ENCODE measurements at regions of chr17 and their contacts with region 1.

Region 1: GRCh38 chr17:76278952-76279741 is 14.0 kb downstream of the UBALD2 start:
- DNase-seq: peak; percentile 70
- H3K4me3 ChIP-seq: no peak overlapping the region
- H3K27ac ChIP-seq: no peak overlapping the region
- H3K4me1 ChIP-seq: no peaks in the 10 kb centered on the region
- H3K27me3 ChIP-seq: no peaks in the 10 kb centered on the region
- CTCF ChIP-seq: peak; percentile 89 to 91
- POLR2A ChIP-seq: no peak

Region 2: DNA sequence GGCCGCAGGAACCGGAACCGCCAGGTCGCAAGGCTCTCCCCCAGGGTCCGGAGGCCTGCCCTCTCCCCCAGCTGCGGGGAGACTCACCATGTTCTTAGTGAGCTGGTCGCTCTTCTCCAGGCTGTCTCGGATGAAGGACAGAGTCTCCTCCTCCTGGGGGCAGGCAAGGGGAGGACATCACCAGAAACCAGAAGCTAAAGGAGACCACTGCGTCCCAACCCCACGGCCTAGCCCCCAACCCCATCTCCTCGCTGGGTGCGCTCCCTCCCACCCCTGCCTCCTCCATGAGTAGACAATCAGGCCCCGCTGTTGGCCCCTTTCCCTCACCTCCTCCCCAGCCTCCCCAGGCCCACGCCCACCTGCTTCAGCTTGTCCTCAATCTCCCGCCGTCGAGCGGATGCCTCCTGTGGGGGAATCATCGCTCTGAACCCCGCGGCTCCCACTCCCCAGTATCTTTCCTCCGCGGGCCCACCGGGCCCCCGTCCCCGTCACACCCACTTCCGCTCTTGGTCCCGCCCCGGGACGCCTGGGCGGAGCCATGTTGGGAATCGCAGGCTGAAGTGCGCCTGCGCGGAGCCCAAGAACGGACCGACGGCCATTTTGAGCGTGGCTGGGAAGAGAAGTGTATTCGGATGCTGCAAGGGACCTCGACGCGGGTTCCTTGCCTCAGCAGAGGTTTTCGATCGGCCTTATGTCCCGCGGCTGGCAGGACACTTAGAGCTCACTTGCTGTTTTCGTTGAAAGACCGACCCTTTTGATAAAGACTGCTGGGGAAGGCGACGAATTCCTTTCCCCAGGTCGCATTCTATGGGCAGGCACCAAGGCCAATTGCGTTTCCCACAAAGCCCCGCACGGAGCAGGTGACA is 175.6 kb before region 1 on chr17 and contains the start of gene EXOC7:
- CTCF ChIA-PET with region 1: interaction called, 24 read pairs
- POLR2A ChIA-PET with region 1: no interaction called
- dilution Hi-C with region 1: no loop called
- intact Hi-C with region 1: no loop called
- DNase-seq: peak; percentile 91
- H3K4me3 ChIP-seq: peak within 1 kb of the TSS; percentile 73 to 87 (median 78)
- H3K27ac ChIP-seq: peak within 1 kb of the TSS; percentile 52
- H3K4me1 ChIP-seq: peaks cover 8% of the 10 kb centered on the region
- H3K27me3 ChIP-seq: no peaks in the 10 kb centered on the region
- CTCF ChIP-seq: peak in 1 of 2 donors; percentile 17
- POLR2A ChIP-seq: peak; percentile 88
- total RNA-seq, gene EXOC7: 122 and 137 TPM in 2 replicates

Region 3: DNA sequence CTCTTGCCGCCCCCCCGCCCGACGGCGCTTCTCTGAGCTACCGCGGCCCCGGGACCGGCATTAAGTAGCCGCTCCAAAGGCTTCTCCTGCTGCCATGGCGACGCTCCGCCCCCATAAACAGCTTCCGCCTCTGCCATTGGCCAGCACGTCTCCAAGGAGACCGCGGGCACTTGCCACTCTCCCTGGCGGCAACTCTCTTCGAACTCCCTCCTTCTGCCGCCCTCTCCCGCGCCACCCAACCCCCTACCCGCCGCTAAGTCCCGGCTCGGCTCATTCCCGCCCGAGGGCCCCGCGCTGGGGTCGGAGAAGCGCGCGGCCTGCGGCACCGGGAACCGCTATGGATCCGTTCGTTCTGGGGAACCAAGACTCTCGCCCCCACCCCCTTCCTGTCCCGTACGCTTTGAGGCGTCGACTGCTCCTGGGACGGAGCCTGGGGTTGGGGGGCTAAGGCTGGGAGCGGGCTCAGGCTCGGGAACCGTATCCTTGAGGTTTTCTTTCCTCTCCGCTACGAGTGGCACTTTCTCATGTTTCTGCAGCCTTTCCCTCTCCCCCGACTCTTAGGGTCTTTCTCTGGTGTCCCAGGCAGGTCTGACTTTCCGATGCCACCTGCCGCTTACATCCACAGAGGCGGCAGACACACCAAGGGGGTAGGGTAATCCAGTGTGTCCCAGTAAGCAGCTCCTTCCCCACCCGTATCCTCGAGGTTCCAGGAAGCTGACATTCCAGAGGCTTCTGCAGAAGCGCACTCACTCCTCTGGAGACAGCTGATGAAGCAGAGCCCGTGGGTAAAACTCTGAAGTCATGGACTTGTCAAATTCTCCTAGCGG is 137.7 kb before region 1 on chr17 and contains the start of gene FOXJ1:
- CTCF ChIA-PET with region 1: interaction called, 16 read pairs
- POLR2A ChIA-PET with region 1: no interaction called
- dilution Hi-C with region 1: no loop called
- intact Hi-C with region 1: no loop called
- DNase-seq: peak; percentile 95
- H3K4me3 ChIP-seq: peak within 1 kb of the TSS in 2 of 3 experiments; percentile 39 to 56
- H3K27ac ChIP-seq: no peak within 1 kb of the TSS
- H3K4me1 ChIP-seq: peaks cover 19% of the 10 kb centered on the region
- H3K27me3 ChIP-seq: peaks cover 16 to 22% of the 10 kb centered on the region in 2 experiments
- CTCF ChIP-seq: no peak
- POLR2A ChIP-seq: no peak
- total RNA-seq, gene FOXJ1: not detected in 2 replicates

Region 4: GRCh38 chr17:76191896-76192295 is 87.3 kb before region 1 on chr17:
- CTCF ChIA-PET with region 1: interaction called, 14 read pairs
- POLR2A ChIA-PET with region 1: no interaction called
- dilution Hi-C with region 1: no loop called
- intact Hi-C with region 1: no loop called
- DNase-seq: no peak
- H3K4me3 ChIP-seq: no peak overlapping the region
- H3K27ac ChIP-seq: no peak overlapping the region
- H3K4me1 ChIP-seq: no peaks in the 10 kb centered on the region
- H3K27me3 ChIP-seq: peaks cover 19 to 28% of the 10 kb centered on the region in 2 experiments
- CTCF ChIP-seq: no peak
- POLR2A ChIP-seq: no peak

Region 5: DNA sequence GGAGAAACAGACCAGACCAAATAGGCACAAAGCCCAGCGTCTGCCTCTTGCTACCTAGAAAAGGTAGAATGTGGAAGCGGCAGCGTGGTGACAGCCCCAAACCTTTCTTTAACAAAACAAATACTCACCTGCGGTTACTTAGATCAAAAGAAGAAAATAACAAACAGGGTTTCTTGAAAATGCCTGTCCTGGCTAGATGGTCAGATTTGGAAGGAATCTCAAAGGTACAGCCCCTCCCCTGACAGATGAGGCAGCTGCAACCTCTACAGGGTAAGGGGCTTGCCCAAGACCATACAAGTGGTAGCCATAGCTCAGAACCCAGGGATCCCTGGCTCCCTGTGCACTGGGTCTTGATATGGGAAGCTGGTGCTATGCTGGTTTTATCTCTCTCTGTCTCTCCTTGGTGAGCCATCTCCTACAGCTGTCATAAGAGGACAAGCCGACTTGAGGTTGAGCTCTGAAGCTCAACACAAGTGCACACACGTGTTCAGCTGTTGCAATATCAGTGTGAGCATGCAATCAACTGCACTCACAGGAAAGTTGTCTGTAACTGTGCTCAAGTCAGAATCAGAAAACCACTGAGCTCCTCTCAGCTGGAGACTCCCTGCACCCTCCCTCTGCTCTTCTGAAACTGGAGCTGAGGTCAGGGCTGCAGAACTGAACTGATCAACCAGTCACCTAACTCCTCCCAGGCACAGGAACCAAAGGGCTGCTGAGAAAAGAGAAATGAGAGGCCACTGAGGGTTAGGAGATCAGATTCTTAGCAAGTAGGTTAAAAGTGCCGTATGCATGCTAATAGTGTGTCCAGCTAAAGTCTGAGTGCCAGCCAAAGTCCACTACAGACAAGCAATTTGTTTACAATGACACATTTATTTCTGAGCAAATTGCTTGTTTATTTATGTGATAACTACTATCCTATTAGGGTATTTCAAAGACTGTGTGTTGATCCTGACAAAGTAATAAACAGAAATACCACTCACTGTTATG is 32.8 kb before region 1 on chr17:
- CTCF ChIA-PET with region 1: interaction called, 125 read pairs
- POLR2A ChIA-PET with region 1: interaction called, 4 read pairs
- dilution Hi-C with region 1: no loop called
- intact Hi-C with region 1: loop called (anchors 2 kb)
- DNase-seq: no peak
- H3K4me3 ChIP-seq: no peak overlapping the region
- H3K27ac ChIP-seq: no peak overlapping the region
- H3K4me1 ChIP-seq: no peaks in the 10 kb centered on the region
- H3K27me3 ChIP-seq: peaks cover 27 to 29% of the 10 kb centered on the region in 2 experiments
- CTCF ChIP-seq: no peak
- POLR2A ChIP-seq: no peak

Region 6: DNA sequence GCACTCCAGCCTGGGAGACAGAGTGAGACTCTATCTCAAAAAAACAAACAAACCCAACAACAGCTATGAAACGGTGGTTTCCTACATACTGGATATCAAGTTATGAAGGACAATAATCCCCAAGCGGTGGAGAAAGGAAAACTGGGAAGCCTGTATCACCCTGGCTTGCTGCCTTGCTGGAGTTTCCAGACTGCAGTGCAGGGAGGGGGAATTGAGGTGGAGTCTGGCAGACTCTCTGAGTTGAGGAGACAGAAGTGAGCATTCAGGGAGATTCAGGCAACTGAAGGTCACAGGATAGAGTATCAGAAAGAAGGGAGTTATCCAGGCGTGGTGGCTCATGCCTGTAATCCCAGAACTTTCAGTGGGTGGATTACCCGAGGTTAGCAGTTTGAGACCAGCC is 17.0 kb after region 1 on chr17:
- CTCF ChIA-PET with region 1: interaction called, 15 read pairs
- POLR2A ChIA-PET with region 1: interaction called, 7 read pairs
- dilution Hi-C with region 1: no loop called
- intact Hi-C with region 1: no loop called
- DNase-seq: no peak
- H3K4me3 ChIP-seq: no peak overlapping the region
- H3K27ac ChIP-seq: no peak overlapping the region
- H3K4me1 ChIP-seq: peaks cover 4% of the 10 kb centered on the region
- H3K27me3 ChIP-seq: no peaks in the 10 kb centered on the region
- CTCF ChIP-seq: no peak
- POLR2A ChIP-seq: no peak

Region 7: DNA sequence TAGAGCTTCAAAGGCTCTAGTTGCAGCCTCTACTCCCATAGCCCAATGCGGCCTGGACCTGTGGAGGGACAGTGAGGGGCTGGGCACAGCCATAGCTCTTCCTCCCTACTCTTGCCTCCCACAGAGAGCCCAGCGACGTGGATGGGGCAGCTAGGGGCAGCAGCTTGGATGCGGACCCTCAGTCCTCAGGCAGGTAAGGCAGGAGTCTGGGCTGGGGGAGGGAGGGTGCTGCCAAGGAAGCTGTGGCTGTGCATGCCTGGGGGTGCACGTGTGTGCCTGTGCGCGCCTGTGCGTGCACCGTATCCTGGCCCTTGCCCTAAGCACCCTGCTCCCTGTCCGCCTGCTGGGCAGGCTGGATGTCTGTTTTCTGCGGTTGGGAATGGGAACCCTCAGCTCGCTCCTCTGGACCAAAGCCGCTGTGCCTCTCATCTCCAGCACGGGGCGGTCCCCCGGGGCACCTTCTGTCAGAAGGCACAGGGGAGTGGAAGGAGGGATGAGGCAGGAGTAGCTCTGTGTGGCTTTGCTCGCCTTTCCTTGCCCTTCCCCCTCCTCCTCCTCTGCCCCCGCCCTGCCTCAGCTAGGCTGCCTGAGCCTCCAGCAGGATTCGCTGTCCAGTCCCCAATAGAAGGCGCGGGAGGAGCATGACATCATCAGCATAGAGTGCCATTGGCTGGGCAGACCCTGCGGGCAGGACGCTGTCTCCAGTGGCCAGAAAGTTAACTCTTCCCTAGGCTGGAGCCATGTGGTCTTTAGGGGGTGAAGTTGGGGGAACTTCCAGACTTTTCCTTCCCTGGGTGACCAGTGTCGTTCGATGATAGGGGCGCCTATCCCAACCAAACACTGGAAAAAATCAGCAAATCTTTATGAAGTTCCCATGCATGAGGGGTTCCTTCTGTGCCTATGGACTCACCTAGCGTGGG is 261.5 kb after region 1 on chr17:
- CTCF ChIA-PET with region 1: no interaction called
- POLR2A ChIA-PET with region 1: no interaction called
- dilution Hi-C with region 1: no loop called
- intact Hi-C with region 1: no loop called
- DNase-seq: peak; percentile 95
- H3K4me3 ChIP-seq: peak overlapping the region in 1 of 3 experiments; percentile 35
- H3K27ac ChIP-seq: no peak overlapping the region
- H3K4me1 ChIP-seq: peaks cover 4% of the 10 kb centered on the region
- H3K27me3 ChIP-seq: peaks cover 17 to 19% of the 10 kb centered on the region in 2 experiments
- CTCF ChIP-seq: peak in 1 of 2 donors; percentile 27
- POLR2A ChIP-seq: peak; percentile 53